Naive thymus-derived CD4-positive, alpha-beta T cell (primary cell): ENCODE measurements at regions of chr12 and their contacts with region 1.

Region 1: GRCh38 chr12:89862511-89863179 is 154.0 kb upstream of the ATP2B1 start:
- DNase-seq: peak in 7 of 9 donors; percentile 46 to 66 (median 57)
- ATAC-seq: peak; percentile 49
- H3K4me3 ChIP-seq: peak overlapping the region; percentile 44
- H3K4me3 Mint-ChIP-seq: peak overlapping the region; percentile 78 to 86 (median 82)
- H3K27ac ChIP-seq: peak overlapping the region; percentile 87
- H3K27ac Mint-ChIP-seq: peak overlapping the region; percentile 96 to 99 (median 98)
- H3K4me1 ChIP-seq: peaks cover 23 to 30% of the 10 kb centered on the region in 2 donors
- H3K4me1 Mint-ChIP-seq: peaks cover 40 to 72% (median 53%) of the 10 kb centered on the region in 7 donors
- H3K27me3 ChIP-seq: no peaks in the 10 kb centered on the region
- H3K27me3 Mint-ChIP-seq: no peaks in the 10 kb centered on the region

Region 2: DNA sequence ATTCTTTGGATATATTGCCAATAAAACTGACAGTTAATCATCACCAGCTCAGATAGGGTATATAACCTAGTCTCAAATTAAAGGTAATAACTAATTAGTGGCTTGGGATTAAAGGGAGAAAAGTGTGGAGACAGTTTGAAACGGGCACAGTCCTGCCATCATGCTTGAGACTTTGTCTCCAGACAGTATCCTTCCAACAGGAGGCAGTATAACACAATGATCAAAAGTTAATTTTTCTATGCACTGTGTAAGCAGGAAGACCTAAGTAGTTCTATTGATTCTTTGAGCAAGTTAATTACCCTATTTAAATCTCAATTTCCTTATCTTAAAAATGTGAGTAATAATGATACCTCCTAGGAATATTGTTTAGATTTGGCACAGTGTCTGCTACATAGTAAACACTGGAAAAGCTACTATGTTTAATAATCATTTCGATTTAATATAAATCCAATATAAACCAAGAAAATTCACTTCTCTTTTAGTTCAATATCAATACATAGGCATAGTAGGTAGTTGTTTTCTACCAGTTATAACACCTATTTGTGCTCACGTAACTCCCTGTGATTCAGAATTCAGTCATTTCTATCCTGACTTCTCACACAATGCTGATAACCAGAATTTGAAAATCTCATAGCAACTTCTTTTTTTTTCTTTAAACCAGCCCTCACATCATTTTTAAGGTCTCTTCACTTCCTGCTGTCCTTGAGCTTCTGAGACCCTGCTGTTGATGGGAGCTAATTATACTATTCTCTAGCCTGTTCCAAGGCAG is 391.7 kb before region 1 on chr12:
- CTCF ChIA-PET with region 1: no interaction called
- POLR2A ChIA-PET with region 1: no interaction called
- intact Hi-C with region 1: loop called in 1 of 2 experiments (anchors 5 kb)
- DNase-seq: peak in 6 of 9 donors; percentile 28 to 56 (median 46)
- ATAC-seq: peak; percentile 86
- H3K4me3 ChIP-seq: no peak overlapping the region
- H3K4me3 Mint-ChIP-seq: peak overlapping the region in 1 of 10 donors; percentile 35
- H3K27ac ChIP-seq: no peak overlapping the region
- H3K27ac Mint-ChIP-seq: peak overlapping the region in 5 of 9 donors; percentile 12 to 85 (median 48)
- H3K4me1 ChIP-seq: peaks cover 23 to 31% of the 10 kb centered on the region in 2 donors
- H3K4me1 Mint-ChIP-seq: peaks cover 26 to 63% (median 44%) of the 10 kb centered on the region in 7 donors
- H3K27me3 ChIP-seq: no peaks in the 10 kb centered on the region
- H3K27me3 Mint-ChIP-seq: no peaks in the 10 kb centered on the region

Region 3: DNA sequence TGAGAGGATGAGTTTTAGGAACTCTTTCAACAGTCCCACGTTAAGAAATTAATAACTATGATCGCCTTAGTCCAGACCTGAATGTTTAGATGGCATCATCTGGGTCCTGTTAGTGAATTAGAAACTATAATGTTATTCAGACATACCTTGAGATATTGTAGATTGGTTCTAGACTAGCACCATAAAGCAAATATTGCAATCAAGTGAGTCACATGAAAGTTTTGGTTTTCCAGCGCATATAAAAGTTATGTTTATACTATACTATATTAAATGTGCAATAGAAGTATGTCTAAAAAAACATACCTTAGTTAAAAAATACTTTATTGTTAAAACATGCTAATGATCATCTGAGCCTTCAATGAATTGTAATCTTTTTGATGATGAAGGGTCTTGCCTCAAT is 47.4 kb before region 1 on chr12:
- CTCF ChIA-PET with region 1: no interaction called
- POLR2A ChIA-PET with region 1: no interaction called
- intact Hi-C with region 1: no loop called
- DNase-seq: no peak
- ATAC-seq: no peak
- H3K4me3 ChIP-seq: no peak overlapping the region
- H3K4me3 Mint-ChIP-seq: no peak overlapping the region
- H3K27ac ChIP-seq: no peak overlapping the region
- H3K27ac Mint-ChIP-seq: no peak overlapping the region
- H3K4me1 ChIP-seq: no peaks in the 10 kb centered on the region
- H3K4me1 Mint-ChIP-seq: peaks cover 0 to 1% (median 0%) of the 10 kb centered on the region in 7 donors
- H3K27me3 ChIP-seq: no peaks in the 10 kb centered on the region
- H3K27me3 Mint-ChIP-seq: peaks cover 0 to 5% (median 0%) of the 10 kb centered on the region in 5 donors

Region 4: GRCh38 chr12:89825591-89826449 is 36.8 kb before region 1 on chr12:
- CTCF ChIA-PET with region 1: no interaction called
- POLR2A ChIA-PET with region 1: no interaction called
- intact Hi-C with region 1: loop called in 1 of 2 experiments (anchors 5 kb)
- DNase-seq: no peak
- ATAC-seq: no peak
- H3K4me3 ChIP-seq: no peak overlapping the region
- H3K4me3 Mint-ChIP-seq: no peak overlapping the region
- H3K27ac ChIP-seq: no peak overlapping the region
- H3K27ac Mint-ChIP-seq: peak overlapping the region in 3 of 9 donors; percentile 2 to 15 (median 5)
- H3K4me1 ChIP-seq: no peaks in the 10 kb centered on the region
- H3K4me1 Mint-ChIP-seq: peaks cover 5 to 17% (median 10%) of the 10 kb centered on the region in 7 donors
- H3K27me3 ChIP-seq: no peaks in the 10 kb centered on the region
- H3K27me3 Mint-ChIP-seq: no peaks in the 10 kb centered on the region

Region 5: DNA sequence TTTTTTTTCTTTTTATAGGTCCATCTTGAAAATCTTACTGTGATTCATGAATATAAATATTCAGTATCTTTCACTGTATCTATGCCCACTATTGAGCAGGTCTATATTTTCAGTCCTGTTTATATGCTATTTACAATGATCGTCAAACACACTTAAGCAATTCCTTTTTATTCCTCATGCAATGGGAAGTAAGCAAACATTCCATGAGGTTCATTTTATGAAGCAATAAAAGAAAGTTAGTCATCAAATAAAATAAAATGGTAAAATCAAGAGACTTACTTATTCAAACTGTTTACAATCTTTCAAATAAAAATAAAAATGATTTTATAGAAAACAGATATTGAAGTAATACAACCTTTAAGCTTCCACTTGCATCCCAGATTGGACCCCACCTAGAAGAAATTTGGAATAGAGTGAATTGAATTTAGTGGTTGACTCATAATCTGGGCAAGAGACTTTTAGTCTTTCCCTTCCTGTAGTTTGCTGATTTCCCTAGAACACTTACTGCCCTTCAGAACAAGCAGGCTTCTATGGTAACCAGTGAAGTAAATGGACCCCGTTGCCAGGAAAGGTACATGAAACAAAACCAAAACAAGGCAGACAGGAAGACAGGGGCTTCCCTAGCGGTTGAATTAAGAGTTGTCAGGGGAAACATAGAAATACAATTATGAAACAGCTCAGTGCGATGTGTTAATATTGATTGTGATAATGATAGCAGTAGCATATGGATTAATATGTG is 87.0 kb after region 1 on chr12:
- CTCF ChIA-PET with region 1: interaction called, 3 read pairs
- POLR2A ChIA-PET with region 1: interaction called, 7 read pairs
- intact Hi-C with region 1: loop called (anchors 1 kb)
- DNase-seq: peak in 7 of 9 donors; percentile 66 to 89 (median 81)
- ATAC-seq: peak; percentile 95
- H3K4me3 ChIP-seq: peak overlapping the region; percentile 2
- H3K4me3 Mint-ChIP-seq: peak overlapping the region in 9 of 10 donors; percentile 1 to 76 (median 64)
- H3K27ac ChIP-seq: peak overlapping the region; percentile 53
- H3K27ac Mint-ChIP-seq: peak overlapping the region in 8 of 9 donors; percentile 62 to 89 (median 76)
- H3K4me1 ChIP-seq: peaks cover 24 to 33% of the 10 kb centered on the region in 2 donors
- H3K4me1 Mint-ChIP-seq: peaks cover 20 to 58% (median 44%) of the 10 kb centered on the region in 7 donors
- H3K27me3 ChIP-seq: no peaks in the 10 kb centered on the region
- H3K27me3 Mint-ChIP-seq: no peaks in the 10 kb centered on the region

Region 6: GRCh38 chr12:90102957-90103652 is 240.5 kb after region 1 on chr12:
- CTCF ChIA-PET with region 1: no interaction called
- POLR2A ChIA-PET with region 1: no interaction called
- intact Hi-C with region 1: loop called (anchors 5 to 10 kb)
- DNase-seq: peak in 6 of 9 donors; percentile 17 to 56 (median 44)
- ATAC-seq: peak; percentile 79
- H3K4me3 ChIP-seq: no peak overlapping the region
- H3K4me3 Mint-ChIP-seq: peak overlapping the region in 8 of 10 donors; percentile 47 to 75 (median 70)
- H3K27ac ChIP-seq: no peak overlapping the region
- H3K27ac Mint-ChIP-seq: peak overlapping the region in 4 of 9 donors; percentile 38 to 63 (median 48)
- H3K4me1 ChIP-seq: no peaks in the 10 kb centered on the region
- H3K4me1 Mint-ChIP-seq: peaks cover 4 to 12% (median 6%) of the 10 kb centered on the region in 7 donors
- H3K27me3 ChIP-seq: no peaks in the 10 kb centered on the region
- H3K27me3 Mint-ChIP-seq: peaks cover 4 to 15% (median 11%) of the 10 kb centered on the region in 5 donors